ENCODE measurements at regions of chr11 and their contacts with region 1.

Region 1: DNA sequence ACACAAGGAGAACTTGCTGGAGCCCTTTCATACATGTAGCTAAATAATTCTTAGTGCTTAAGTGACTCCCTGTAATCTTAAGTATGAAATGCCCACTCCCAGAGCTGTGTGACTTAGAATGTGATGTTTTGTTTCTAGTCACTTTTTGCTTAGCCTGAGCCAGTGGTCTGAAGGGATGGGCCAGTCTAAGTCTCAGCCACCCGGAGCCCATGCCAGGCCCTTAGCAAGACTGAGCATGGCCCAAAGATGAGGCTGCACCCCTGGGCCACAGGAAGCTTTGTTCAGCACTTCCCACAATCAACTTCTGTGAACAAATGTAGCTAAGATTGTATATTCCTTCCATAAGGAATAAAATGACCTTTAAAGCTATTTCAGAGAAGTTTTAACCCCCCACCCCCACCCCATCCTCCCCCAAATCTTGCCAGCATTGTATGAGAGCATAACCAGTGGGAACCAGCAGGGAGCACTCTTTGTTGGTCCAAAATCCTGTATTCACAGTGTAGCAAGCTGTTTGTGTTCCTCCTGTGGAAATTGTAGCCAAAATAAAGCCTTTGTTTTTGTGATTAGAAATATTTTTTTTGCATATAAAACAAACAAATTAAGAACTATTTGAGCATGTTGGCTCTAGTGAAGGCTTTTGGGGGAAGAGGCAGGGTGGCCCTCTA is 73.8 kb upstream of the GAL start:
- DNase-seq: no peak

Region 2: DNA sequence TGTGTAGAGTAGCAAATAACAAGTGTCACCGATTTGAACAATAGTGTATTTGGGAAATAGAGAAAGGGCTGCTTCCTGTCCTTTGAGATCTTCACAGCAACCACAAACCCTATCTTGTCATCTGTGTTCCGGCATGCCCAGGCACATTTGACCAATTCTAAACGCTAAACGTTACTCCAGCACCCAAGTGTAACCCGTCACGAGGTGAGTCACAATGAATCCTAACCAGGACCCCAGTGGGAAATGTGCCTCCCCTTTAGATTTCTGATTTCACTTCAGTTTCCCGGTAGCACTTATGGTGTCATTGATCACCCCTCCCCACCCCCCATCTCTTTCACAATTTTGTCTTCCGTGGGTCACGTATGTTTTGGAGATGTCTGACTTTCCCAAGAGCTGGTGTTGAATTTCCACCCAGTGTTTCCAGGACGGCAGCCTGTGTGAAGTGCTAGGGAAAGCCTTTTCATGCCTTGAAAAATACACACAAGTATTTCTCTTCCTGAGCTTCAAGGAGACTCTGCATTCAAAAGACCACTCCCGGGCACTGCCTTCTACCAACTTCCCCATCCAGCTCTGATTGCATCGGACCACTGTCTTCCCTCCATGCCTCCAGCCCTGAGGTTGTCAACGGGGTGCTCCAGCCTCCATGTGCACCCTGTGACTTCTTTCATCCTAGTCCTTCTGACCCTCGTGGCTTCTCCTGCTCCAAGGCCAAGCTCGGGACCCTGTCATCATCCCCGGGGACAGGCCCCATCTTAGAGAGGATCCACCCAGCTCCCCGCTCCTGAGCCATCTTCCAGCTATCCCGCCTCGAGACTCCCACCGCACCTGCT is 328.2 kb before region 1 on chr11:
- in situ Hi-C with region 1: no loop called
- DNase-seq: peak; percentile 97

Region 3: DNA sequence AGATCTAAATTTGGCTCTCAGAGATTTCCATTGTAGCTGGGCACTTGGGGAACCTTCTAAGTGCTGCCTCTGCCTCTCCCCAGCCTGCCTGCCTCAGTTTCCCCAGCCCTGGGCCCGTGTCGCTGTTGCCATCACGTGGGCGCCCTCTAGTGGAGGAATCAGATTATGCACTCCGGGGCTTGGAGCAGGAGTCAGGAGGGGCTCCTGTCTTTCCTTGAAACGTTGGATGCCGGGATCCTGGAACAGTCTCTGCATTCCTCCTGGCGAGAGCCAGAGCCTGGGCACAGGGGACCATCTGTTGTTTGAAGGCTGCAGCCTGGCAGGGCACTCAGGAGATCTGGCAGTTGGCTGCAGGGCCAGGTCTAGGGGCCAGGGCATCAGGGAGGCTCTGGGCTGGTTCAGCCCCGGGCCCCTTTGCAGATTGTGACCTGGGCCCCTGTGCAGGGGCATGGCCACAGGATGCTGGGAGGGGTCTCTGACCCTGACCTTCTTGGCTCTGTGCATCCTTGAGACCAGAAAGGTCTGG is 226.5 kb before region 1 on chr11:
- in situ Hi-C with region 1: no loop called
- DNase-seq: peak; percentile 50

Region 4: DNA sequence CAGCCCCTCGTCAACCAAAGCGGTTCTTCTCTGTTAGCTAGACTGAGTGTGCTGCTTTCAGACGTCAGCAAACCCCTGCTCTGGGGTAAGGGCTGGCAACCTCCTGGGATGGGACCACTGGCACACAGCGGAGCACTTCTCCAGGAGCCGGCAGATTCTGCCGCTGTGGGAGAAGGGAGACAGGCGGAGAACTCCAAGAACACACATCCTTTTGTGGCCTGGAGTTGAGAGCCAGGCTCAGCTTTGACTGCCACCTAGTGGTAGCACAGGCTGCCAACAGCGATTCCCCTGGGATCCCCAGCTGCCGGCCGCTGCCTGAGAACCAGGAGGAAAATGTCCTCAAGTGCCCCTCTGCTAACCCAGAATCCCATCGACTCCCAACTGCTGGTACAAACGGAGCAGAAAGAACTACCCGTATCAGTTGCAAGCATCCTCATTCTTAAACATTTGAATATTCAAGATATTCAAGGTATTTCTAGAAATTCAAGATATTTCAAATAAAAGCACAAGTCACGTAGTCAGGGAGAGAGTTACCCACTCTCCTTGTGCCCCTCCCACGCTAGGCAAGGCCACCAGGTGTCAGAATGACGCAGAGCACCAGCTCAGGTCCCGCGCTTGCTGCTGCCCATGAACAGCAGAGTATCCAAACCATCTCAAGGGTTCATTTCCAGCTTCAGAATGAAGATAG is 1059.7 kb after region 1 on chr11:
- in situ Hi-C with region 1: loop called (anchors 25 kb)
- DNase-seq: peak; percentile 75

Measured in KBM-7 (cell line).